ENCODE measurements at regions of chr10 and their contacts with region 1.

Region 1: DNA sequence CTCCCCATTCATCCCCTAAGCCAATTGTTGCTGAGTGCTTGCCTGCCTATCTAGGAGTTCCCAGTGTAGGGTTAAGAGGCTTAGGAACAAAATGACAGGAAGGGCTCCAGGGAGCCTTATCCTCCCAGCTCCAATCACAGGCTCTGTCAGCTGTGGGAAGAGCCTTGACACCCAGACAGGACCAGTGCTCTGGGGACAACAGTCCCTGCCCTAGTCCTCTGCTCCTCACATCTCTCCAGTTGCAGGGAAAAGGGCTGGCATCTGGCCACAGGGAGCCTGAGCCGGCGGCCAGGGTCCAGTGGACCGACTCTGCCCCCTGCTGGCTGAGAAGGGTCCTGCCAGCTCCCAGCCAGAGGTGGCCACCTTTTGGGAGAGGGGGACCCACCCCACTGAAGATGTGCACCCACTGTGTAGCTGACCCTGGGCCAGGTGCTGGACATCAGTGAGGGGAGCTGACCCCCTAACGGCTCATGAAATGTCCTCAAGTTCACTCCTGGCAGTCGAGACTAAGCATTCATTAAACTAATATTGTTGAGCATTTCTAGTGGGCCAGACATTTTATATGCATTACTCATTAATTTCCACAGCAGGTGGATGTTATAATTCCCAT is 17.6 kb downstream of the DNAJB12 start:
- DNase-seq: peak in 1 of 2 experiments; percentile 91
- H3K4me3 ChIP-seq: no peak overlapping the region
- H3K27ac ChIP-seq: no peak overlapping the region
- H3K4me1 ChIP-seq: peaks cover 0 to 22% (median 11%) of the 10 kb centered on the region in 4 experiments; a peak in 6 of 7 replicates
- H3K27me3 ChIP-seq: no peaks in the 10 kb centered on the region
- CTCF ChIP-seq: peak in 2 of 3 experiments; percentile 92 to 93; a peak in 3 of 4 replicates
- EP300 ChIP-seq: no peak
- POLR2A ChIP-seq: no peak
- RAD21 ChIP-seq: peak; percentile 91 to 95

Region 2: GRCh38 chr10:72107325-72108003 is 229.7 kb before region 1 on chr10:
- CTCF ChIA-PET with region 1: no interaction called
- POLR2A ChIA-PET with region 1: no interaction called
- DNase-seq: no peak
- H3K4me3 ChIP-seq: no peak overlapping the region
- H3K27ac ChIP-seq: no peak overlapping the region
- H3K4me1 ChIP-seq: no peaks in the 10 kb centered on the region
- H3K27me3 ChIP-seq: no peaks in the 10 kb centered on the region
- CTCF ChIP-seq: no peak
- EP300 ChIP-seq: no peak
- POLR2A ChIP-seq: no peak
- RAD21 ChIP-seq: no peak

Region 3: DNA sequence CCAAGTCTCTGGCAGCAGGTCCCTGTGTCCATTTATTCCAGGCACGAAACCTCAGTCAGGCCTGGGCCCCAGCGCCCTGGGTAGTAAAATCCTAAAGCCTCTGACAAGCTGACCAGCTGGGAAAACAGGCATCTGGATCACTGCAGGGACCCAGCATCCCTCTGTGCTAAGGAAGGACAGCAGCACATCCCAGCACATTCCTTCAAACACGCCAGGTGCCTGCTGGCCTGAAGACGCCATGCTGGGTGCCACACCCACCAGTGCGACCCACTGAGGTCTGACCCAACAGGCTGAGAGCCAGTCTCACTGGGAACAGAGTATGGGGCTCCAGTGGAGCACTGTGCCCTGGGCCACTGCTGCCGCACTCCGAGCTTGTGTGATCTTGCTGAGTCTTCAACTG is 11.2 kb after region 1 on chr10:
- CTCF ChIA-PET with region 1: interaction called, 24 read pairs
- POLR2A ChIA-PET with region 1: interaction called, 64 read pairs
- DNase-seq: no peak
- H3K4me3 ChIP-seq: no peak overlapping the region
- H3K27ac ChIP-seq: no peak overlapping the region
- H3K4me1 ChIP-seq: peaks cover 3 to 6% (median 3%) of the 10 kb centered on the region in 4 experiments; a peak in 4 of 7 replicates
- H3K27me3 ChIP-seq: no peaks in the 10 kb centered on the region
- CTCF ChIP-seq: no peak
- EP300 ChIP-seq: no peak
- POLR2A ChIP-seq: no peak
- RAD21 ChIP-seq: no peak

Region 4: GRCh38 chr10:72354478-72355213 is 17.5 kb after region 1 on chr10 and contains the start of gene DNAJB12:
- CTCF ChIA-PET with region 1: interaction called, 22 read pairs
- POLR2A ChIA-PET with region 1: interaction called, 64 read pairs
- DNase-seq: peak; percentile 86 to 96
- H3K4me3 ChIP-seq: peak within 1 kb of the TSS; percentile 86 to 100 (median 92)
- H3K27ac ChIP-seq: peak within 1 kb of the TSS; percentile 98
- H3K4me1 ChIP-seq: peaks cover 5 to 7% (median 6%) of the 10 kb centered on the region in 4 experiments; a peak in 6 of 7 replicates
- H3K27me3 ChIP-seq: no peaks in the 10 kb centered on the region
- CTCF ChIP-seq: no peak
- EP300 ChIP-seq: no peak; a peak in 1 of 3 replicates
- POLR2A ChIP-seq: peak; percentile 87 to 95
- RAD21 ChIP-seq: 0 out of 4 replicates have a peak, but pooled peaks of 1 of the 2 experiments have one; percentile 2
- total RNA-seq, gene DNAJB12: 19.6 and 20.5 TPM in 2 replicates

Measured in H1 (cell line).